Activated B cell treated with CpG ODN at 0.5 μM for 24 hours (primary cell): ENCODE measurements at regions of chr1 and their contacts with region 1.

Region 1: DNA sequence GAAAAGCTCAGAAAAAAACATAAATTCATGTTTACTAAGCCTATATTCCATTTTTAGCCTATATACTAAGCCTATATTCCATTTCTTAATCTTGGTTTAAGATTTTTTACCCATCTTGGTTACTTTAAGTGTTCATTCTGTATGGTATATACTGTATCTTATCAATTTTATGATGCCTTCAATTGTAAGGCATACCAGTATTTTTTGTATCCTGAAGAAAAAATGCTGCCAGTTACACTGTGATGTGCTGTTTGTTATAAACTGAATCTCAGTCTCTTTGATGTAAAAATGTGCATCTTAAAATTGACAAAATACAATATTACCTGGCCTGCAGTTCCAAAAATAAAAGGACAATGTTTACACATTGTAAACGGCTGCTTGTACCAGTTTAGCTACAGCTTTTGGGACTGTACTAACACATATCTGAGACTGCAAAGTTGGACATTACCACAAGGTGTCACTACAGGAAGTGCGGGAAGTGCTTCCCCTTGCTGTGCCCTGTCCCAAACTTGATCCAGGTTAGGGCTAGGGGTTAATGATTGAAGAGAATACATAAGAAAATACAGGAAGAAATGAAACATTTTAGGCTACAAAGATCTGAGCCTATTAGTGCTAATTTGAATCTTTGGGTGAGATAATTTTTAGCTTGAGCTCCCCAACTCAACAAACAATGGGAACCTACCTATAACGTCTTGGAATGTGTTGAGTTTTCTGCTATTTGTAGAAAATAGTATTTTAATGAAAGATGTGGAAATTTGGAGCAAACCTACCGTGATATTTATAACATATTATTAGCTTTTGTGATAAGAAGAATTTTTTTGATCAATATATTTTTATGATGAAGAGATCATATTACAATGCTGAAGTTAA is 108.9 kb downstream of the LBR start:
- DNase-seq: no peak
- ATAC-seq: peak; percentile 50
- H3K4me3 Mint-ChIP-seq: no peak overlapping the region
- H3K27ac Mint-ChIP-seq: no peak overlapping the region
- H3K4me1 Mint-ChIP-seq: no peaks in the 10 kb centered on the region
- H3K27me3 Mint-ChIP-seq: peaks cover 10% of the 10 kb centered on the region
- CTCF ChIP-seq: no peak

Region 2: DNA sequence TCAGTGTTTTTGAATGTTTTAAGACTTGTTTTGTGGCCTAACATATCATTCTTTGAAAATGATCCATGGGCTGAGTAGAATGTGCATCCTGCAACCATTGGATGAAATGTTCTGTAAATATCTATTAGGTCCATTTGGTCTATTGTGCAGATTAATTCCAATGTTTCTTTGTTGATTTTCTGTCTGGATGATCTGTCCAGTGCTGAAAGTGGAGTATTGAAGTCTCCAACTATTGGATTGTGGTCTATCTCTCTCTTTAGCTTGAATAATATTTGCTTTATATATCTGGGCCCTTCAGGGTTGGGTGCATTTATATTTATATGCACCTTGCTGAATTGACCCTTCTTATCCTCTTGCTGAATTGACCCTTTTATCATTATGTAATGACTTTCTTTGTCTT is 207.9 kb before region 1 on chr1:
- CTCF ChIA-PET with region 1: no interaction called
- POLR2A ChIA-PET with region 1: no interaction called
- intact Hi-C with region 1: no loop called
- DNase-seq: no peak
- ATAC-seq: no peak
- H3K4me3 Mint-ChIP-seq: no peak overlapping the region
- H3K27ac Mint-ChIP-seq: no peak overlapping the region
- H3K4me1 Mint-ChIP-seq: no peaks in the 10 kb centered on the region
- H3K27me3 Mint-ChIP-seq: peaks cover 2% of the 10 kb centered on the region
- CTCF ChIP-seq: no peak

Region 3: DNA sequence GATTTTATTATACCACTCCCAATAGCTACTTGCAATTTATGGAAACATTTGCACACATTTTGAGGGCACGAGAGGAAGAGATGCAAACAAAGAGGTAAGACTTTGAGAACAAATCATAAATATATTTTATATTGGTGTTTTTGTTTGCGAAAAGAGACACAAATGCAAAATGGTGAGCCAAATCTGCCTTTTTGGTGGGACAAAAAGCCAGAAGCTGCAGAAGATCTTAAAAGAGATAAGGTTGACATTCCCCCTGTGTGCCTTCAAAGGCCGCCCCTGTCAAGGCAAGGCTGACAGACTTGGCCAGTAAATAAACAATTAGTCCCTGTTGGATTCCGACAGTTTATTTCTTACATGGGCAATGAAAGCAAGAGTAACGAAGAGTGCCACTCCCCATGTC is 13.9 kb before region 1 on chr1:
- CTCF ChIA-PET with region 1: interaction called, 14 read pairs
- POLR2A ChIA-PET with region 1: no interaction called
- intact Hi-C with region 1: no loop called
- DNase-seq: no peak
- ATAC-seq: no peak
- H3K4me3 Mint-ChIP-seq: no peak overlapping the region
- H3K27ac Mint-ChIP-seq: no peak overlapping the region
- H3K4me1 Mint-ChIP-seq: peaks cover 2% of the 10 kb centered on the region
- H3K27me3 Mint-ChIP-seq: no peaks in the 10 kb centered on the region
- CTCF ChIP-seq: no peak

Region 4: DNA sequence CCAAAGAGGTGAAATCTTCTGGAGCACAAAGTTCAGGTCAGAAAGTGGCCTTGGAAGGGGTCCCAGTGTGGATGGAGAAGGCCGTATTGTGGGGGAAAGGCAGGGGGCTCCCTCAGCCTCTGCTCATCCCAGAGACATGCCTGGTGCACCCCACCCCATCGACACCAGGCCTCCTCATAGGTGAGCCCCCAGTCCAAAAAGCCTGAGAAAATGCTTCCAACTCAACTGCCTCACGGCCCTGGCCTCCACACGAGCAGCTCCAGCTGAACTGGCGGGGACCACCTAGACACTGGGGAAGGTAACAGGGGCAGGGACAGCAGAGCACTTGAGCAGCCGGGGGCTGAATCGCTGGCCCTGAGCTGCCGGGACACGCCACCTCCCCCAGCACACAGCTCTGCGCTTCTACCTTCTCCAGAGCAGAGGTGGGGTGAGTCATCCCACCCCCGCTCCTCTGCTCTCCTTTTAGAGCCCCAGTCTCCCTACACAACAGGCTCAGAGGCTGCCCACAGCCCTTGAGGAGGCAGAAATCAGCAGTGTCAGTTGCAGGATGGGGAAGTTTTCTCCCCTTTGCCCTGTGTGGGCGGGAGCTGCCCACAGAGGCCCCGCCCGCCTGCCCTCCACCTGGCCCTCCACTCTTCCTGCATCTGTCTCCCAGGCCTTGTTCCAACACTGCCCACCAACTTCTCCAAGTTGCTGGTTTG is 1324.1 kb after region 1 on chr1:
- CTCF ChIA-PET with region 1: no interaction called
- POLR2A ChIA-PET with region 1: no interaction called
- intact Hi-C with region 1: no loop called
- DNase-seq: peak; percentile 52
- ATAC-seq: peak; percentile 63
- H3K4me3 Mint-ChIP-seq: peak overlapping the region; percentile 67
- H3K27ac Mint-ChIP-seq: peak overlapping the region; percentile 88
- H3K4me1 Mint-ChIP-seq: peaks cover 76% of the 10 kb centered on the region
- H3K27me3 Mint-ChIP-seq: no peaks in the 10 kb centered on the region
- CTCF ChIP-seq: no peak